Naive thymus-derived CD4-positive, alpha-beta T cell (primary cell): ENCODE measurements at regions of chr19 and their contacts with region 1.

Region 1: GRCh38 chr19:18700501-18701249 is 17.2 kb downstream of the CRTC1 start:
- DNase-seq: peak; percentile 50 to 76 (median 68)
- ATAC-seq: peak; percentile 97
- H3K4me3 ChIP-seq: peak overlapping the region; percentile 71
- H3K4me3 Mint-ChIP-seq: peak overlapping the region; percentile 84 to 95 (median 91)
- H3K27ac ChIP-seq: peak overlapping the region; percentile 76
- H3K27ac Mint-ChIP-seq: peak overlapping the region; percentile 39 to 98 (median 94)
- H3K4me1 ChIP-seq: peaks cover 24 to 38% of the 10 kb centered on the region in 2 donors
- H3K4me1 Mint-ChIP-seq: peaks cover 15 to 52% (median 36%) of the 10 kb centered on the region in 7 donors
- H3K27me3 ChIP-seq: no peaks in the 10 kb centered on the region
- H3K27me3 Mint-ChIP-seq: peaks cover 0 to 4% (median 0%) of the 10 kb centered on the region in 5 donors

Region 2: DNA sequence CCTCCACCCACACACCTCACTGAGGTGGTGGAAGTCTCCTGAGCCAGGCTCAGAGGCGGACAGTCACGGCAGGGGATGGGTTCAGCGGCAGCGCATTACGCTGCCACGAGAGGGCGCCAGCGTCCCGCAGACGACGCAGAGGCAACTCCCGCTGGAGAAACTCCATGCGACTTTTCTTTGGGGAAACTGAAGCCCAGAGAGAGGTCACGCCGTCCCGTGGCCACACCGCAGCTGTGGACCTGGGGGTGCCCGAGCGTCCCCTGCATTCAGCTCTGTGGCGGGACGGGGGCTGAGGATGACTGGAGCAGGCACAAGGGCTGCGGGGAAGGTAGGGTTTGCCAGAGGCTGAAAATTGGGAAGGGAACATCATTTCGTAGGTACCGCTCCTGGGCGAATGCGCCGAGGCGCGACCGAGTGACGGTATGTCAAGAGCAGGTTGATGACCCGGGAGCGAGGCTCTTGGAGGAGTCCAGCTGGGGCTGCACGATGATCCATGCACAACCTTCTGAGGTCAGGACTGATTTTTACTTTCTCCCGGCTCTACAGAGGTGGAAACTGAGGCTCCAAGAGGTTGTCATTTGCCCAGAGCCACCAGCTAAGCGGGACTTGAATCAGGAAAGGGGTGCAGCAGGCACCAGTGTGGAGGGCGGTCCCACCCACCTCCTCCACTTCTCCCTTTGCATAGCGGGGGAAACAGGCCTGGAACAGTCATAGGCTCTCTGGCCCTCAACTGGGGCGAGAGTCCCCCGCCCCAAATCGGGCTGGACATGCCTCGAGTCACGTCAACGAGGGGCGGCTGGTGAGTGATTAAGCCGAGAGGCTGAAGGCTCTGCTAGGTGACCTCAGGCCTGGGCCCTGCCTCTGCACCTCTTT is 693.4 kb before region 1 on chr19:
- CTCF ChIA-PET with region 1: no interaction called
- POLR2A ChIA-PET with region 1: no interaction called
- intact Hi-C with region 1: no loop called
- DNase-seq: peak; percentile 70 to 88 (median 82)
- ATAC-seq: peak; percentile 74
- H3K4me3 ChIP-seq: peak overlapping the region; percentile 53
- H3K4me3 Mint-ChIP-seq: peak overlapping the region; percentile 86 to 98 (median 92)
- H3K27ac ChIP-seq: peak overlapping the region; percentile 91
- H3K27ac Mint-ChIP-seq: peak overlapping the region; percentile 71 to 99 (median 94)
- H3K4me1 ChIP-seq: peaks cover 28 to 36% of the 10 kb centered on the region in 2 donors
- H3K4me1 Mint-ChIP-seq: peaks cover 19 to 45% (median 28%) of the 10 kb centered on the region in 7 donors
- H3K27me3 ChIP-seq: no peaks in the 10 kb centered on the region
- H3K27me3 Mint-ChIP-seq: no peaks in the 10 kb centered on the region

Region 3: GRCh38 chr19:18683213-18683939 is 17.3 kb before region 1 on chr19 and contains the start of gene CRTC1:
- CTCF ChIA-PET with region 1: no interaction called
- POLR2A ChIA-PET with region 1: interaction called, 17 read pairs
- intact Hi-C with region 1: loop called (anchors 1 to 2 kb)
- DNase-seq: peak; percentile 91 to 98 (median 96)
- ATAC-seq: peak; percentile 94
- H3K4me3 ChIP-seq: peak within 1 kb of the TSS; percentile 92
- H3K4me3 Mint-ChIP-seq: peak within 1 kb of the TSS; percentile 80 to 93 (median 87)
- H3K27ac ChIP-seq: peak within 1 kb of the TSS; percentile 78
- H3K27ac Mint-ChIP-seq: peak within 1 kb of the TSS; percentile 31 to 94 (median 90)
- H3K4me1 ChIP-seq: peaks cover 12 to 16% of the 10 kb centered on the region in 2 donors
- H3K4me1 Mint-ChIP-seq: peaks cover 6 to 45% (median 27%) of the 10 kb centered on the region in 7 donors
- H3K27me3 ChIP-seq: no peaks in the 10 kb centered on the region
- H3K27me3 Mint-ChIP-seq: peaks cover 0 to 3% (median 0%) of the 10 kb centered on the region in 5 donors
- total RNA-seq, gene CRTC1: 8.4 to 23.4 (median 22.3) TPM

Region 4: DNA sequence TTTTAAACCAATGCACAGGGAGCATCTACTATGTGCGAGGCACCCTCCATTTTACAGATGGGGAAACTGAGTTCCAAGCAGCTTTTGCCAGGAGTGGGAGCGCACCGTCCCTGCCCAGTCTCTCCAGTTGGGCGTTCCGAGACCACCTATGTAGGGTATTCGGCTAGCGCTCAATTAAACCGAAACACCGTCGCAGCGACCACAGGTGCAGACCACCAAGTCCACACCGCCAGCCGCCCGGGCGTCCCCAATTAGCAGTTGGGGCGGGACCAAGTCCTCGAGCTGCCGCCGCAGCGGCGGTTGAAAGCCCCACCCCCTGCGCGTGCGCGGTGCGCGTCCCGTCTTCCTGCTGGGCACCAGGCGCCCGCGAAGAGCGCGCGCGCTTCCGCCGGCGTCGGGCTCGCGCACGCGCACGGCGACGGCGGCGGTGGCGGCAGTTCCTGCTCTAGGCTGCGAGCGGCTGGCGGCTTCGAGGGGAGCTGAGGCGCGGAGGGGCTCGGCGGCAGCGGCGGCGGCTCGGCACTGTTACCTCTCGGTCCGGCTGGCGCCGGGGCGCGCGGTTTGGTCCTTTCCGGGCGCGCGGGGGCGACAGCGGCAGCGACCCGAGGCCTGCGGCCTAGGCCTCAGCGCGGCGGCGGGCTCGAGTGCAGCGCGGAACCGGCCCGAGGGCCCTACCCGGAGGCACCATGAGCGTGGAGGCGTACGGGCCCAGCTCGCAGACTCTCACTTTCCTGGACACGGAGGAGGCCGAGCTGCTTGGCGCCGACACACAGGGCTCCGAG is 131.0 kb after region 1 on chr19 and contains the start of gene UPF1:
- CTCF ChIA-PET with region 1: no interaction called
- POLR2A ChIA-PET with region 1: no interaction called
- intact Hi-C with region 1: loop called in 1 of 2 experiments (anchors 5 kb)
- DNase-seq: peak; percentile 92 to 99 (median 96)
- ATAC-seq: peak; percentile 93
- H3K4me3 ChIP-seq: peak within 1 kb of the TSS; percentile 95
- H3K4me3 Mint-ChIP-seq: peak within 1 kb of the TSS; percentile 89 to 97 (median 92)
- H3K27ac ChIP-seq: peak within 1 kb of the TSS; percentile 90
- H3K27ac Mint-ChIP-seq: peak within 1 kb of the TSS; percentile 83 to 96 (median 90)
- H3K4me1 ChIP-seq: peaks cover 17 to 23% of the 10 kb centered on the region in 2 donors
- H3K4me1 Mint-ChIP-seq: peaks cover 36 to 42% (median 39%) of the 10 kb centered on the region in 7 donors
- H3K27me3 ChIP-seq: no peaks in the 10 kb centered on the region
- H3K27me3 Mint-ChIP-seq: peaks cover 0 to 18% (median 6%) of the 10 kb centered on the region in 5 donors
- total RNA-seq, gene UPF1: 98.7 to 148 (median 113) TPM

Region 5: DNA sequence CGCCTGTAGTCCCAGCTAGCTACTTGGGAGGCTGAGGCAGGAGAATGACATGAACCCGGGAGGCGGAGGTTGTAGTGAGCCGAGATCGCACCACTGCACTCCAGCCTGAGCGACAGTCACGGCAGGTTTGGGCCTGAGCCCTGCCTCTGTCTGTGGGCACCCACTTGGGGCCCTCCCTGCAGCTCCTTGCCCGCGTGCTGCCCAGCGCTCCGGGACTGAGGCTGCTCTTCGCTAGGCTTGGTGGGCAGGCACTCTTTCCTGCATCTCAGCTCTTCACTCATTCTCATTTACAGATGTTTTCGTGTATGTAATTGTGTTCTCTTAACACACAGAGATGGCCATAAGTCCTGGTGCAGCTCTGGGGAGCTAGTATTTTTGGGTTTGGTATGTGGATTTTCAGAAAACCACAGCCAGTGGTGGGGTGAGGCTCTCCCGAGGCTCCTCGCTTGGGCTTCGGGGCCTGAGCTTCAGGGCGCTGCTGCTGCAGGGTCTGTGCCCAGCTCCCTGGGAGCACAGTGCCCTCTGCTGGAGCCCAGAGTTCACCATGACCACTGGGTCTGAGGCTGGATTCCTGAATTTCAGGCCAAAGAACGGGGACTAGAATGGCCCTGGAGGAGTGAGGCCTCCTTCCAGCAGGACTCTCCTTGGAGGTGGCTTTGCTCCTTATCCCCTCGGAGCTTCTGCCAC is 146.3 kb after region 1 on chr19:
- CTCF ChIA-PET with region 1: interaction called, 4 read pairs
- POLR2A ChIA-PET with region 1: no interaction called
- intact Hi-C with region 1: loop called in 1 of 2 experiments (anchors 1 kb)
- DNase-seq: peak; percentile 45 to 70 (median 57)
- ATAC-seq: peak; percentile 83
- H3K4me3 ChIP-seq: no peak overlapping the region
- H3K4me3 Mint-ChIP-seq: peak overlapping the region in 8 of 10 donors; percentile 27 to 71 (median 56)
- H3K27ac ChIP-seq: no peak overlapping the region
- H3K27ac Mint-ChIP-seq: peak overlapping the region in 8 of 9 donors; percentile 23 to 83 (median 69)
- H3K4me1 ChIP-seq: peaks cover 32 to 34% of the 10 kb centered on the region in 2 donors
- H3K4me1 Mint-ChIP-seq: peaks cover 49 to 65% (median 54%) of the 10 kb centered on the region in 7 donors
- H3K27me3 ChIP-seq: no peaks in the 10 kb centered on the region
- H3K27me3 Mint-ChIP-seq: no peaks in the 10 kb centered on the region